T-cell (primary cell): ENCODE measurements at regions of chr5 and their contacts with region 1.

Region 1: GRCh38 chr5:73902327-73903051 is 276.5 kb downstream of the ARHGEF28 start:
- DNase-seq: peak in 4 of 35 experiments; percentile 1 to 71 (median 16)
- ATAC-seq: no peak
- H3K4me3 ChIP-seq: no peak overlapping the region
- H3K4me3 Mint-ChIP-seq: no peak overlapping the region
- H3K27ac ChIP-seq: no peak overlapping the region
- H3K27ac Mint-ChIP-seq: no peak overlapping the region
- H3K4me1 ChIP-seq: no peaks in the 10 kb centered on the region
- H3K4me1 Mint-ChIP-seq: no peaks in the 10 kb centered on the region
- H3K27me3 ChIP-seq: peaks cover 0 to 11% of the 10 kb centered on the region in 2 experiments
- H3K27me3 Mint-ChIP-seq: peaks cover 18 to 19% of the 10 kb centered on the region in 2 donors

Region 2: DNA sequence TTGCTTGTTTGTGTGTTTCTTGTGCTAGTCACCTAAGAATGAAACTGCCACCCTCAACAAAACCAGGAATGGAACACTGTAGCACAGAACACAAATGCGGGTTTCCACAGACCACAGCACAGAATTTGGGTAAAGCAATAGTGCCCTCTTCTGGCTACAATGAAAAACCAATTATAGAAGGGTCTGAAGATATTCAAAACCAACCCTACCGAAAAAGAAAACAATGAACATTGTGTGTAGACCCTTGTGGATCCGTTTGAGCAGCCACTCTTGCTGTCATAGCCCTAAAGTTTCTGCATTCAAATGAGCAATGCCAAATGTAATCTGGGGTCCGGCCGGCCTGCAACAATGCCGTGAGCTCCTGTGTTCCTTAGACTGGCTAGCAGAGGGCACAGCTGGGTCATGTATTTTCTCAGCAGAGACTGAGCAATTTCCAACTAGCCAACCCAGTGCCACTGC is 746.4 kb after region 1 on chr5:
- CTCF ChIA-PET with region 1: interaction called, 14 to 27 read pairs
- POLR2A ChIA-PET with region 1: no interaction called
- DNase-seq: peak in 7 of 35 experiments; percentile 7 to 78 (median 21)
- ATAC-seq: peak; percentile 66 to 75 (median 72)
- H3K4me3 ChIP-seq: no peak overlapping the region
- H3K4me3 Mint-ChIP-seq: no peak overlapping the region
- H3K27ac ChIP-seq: no peak overlapping the region
- H3K27ac Mint-ChIP-seq: no peak overlapping the region
- H3K4me1 ChIP-seq: no peaks in the 10 kb centered on the region
- H3K4me1 Mint-ChIP-seq: no peaks in the 10 kb centered on the region
- H3K27me3 ChIP-seq: peaks cover 0 to 7% of the 10 kb centered on the region in 2 experiments
- H3K27me3 Mint-ChIP-seq: peaks cover 8% of the 10 kb centered on the region in 2 donors